ENCODE measurements at regions of chr6 and their contacts with region 1.

Region 1: DNA sequence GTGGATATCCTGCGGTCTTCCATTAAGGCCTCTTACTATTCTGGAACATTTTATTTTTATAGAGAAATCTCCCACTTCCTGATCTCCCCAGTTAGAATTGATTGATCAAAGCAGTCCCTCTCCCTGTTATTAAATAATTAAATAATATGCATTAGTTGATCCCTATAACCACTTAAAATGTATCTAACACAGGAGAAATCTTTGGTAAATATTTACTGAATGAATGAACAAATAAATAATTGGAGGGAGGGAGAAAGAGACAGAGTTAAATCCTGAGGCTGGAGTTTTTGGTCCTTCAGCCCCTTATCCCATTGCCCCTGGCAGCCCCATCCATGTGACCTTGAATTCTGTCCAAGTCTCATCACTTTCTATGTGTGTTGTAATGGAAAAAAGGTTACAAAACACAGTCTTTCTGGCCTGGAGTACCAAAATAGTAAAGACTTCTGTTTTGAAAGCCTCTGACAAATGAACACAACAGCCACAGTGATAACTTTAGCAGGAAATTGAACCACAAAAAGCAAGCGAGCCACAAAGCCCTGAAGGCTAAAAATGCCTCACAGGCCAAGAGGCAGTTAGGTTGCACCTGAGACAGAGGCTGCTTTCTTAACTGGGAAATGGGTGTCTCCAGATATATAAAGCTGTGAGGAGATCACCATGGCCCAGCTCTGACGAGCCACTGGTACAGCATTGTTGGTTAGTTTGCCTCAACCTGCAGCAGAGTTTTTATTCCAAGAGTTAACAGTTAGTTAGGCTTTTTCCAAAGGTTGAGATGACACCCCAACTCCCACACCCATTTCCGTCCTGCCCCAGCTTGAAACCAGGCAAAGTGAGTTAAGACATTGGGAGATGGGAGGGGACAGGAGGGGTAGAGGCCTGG is 11.3 kb downstream of the NT5E start:
- DNase-seq: no peak
- ATAC-seq: peak; percentile 56
- H3K4me3 ChIP-seq: no peak overlapping the region
- H3K27ac ChIP-seq: peak overlapping the region; percentile 52 to 57
- H3K4me1 ChIP-seq: peaks cover 2 to 16% of the 10 kb centered on the region in 2 donors
- H3K27me3 ChIP-seq: no peaks in the 10 kb centered on the region

Region 2: DNA sequence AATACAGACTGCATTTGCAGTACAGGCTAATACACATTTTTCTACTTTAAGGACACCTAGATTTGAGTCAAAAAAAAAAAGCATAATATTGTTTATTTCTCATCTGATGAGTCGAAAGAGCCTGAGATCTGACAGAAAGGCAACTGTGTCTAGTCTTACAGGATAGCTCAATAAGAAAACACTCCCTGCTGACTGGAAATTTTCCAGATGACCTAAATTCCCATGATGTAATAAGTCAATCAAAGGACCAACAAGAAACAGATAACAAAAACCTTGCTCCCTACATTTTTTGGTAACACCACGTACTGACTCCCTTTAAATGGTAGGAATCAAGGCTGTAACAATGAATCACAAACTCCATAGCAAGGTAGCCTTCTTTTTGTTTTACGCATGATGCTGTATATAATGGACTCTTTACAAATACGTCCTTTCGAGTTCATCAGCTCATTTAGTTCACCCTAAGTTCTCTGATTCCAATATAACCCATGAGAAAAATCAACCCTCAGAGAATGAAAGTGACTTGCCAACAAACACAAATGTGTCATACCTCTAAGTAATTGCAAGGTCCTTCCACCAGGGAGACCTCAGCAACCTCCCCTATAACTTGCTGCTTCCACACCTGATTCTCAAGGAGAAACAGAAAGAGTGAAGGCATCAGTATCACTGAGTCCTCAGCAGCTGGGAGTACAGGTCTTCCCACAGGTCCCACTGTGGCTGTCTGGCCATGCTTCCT is 708.9 kb before region 1 on chr6:
- intact Hi-C with region 1: loop called in 1 of 2 experiments (anchors 10 kb)
- DNase-seq: no peak
- ATAC-seq: no peak
- H3K4me3 ChIP-seq: no peak overlapping the region
- H3K27ac ChIP-seq: peak overlapping the region in 1 of 2 donors; percentile 39
- H3K4me1 ChIP-seq: peaks cover 7 to 11% of the 10 kb centered on the region in 2 donors
- H3K27me3 ChIP-seq: no peaks in the 10 kb centered on the region

Region 3: DNA sequence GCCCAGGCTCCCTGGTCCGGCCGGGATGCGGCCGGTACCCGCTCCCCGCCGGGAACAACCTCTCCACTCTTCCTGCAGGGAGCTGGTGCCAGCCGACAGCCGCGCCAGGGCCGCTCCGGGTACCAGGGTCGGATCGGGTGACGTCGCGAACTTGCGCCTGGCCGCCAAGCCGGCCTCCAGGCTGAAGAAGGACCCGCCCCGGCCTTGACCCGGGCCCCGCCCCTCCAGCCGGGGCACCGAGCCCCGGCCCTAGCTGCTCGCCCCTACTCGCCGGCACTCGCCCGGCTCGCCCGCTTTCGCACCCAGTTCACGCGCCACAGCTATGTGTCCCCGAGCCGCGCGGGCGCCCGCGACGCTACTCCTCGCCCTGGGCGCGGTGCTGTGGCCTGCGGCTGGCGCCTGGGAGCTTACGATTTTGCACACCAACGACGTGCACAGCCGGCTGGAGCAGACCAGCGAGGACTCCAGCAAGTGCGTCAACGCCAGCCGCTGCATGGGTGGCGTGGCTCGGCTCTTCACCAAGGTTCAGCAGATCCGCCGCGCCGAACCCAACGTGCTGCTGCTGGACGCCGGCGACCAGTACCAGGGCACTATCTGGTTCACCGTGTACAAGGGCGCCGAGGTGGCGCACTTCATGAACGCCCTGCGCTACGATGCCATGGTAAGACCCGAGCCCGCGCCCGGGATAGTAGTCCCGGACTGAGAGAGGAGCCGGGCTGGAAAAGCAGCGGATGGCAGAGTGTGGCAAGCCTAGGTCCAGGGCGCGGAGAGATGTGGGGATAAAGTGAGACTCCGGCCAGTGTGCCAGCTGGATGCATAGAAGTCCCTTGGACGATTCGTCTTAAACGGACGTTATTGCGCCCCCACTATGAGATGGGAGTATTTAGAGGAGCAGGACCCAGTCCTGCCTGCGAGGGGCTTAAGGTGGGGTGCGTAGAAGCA is 11.1 kb before region 1 on chr6 and contains the start of gene NT5E:
- intact Hi-C with region 1: loop called in 1 of 2 experiments (anchors 2 kb)
- DNase-seq: peak; percentile 92 to 97
- ATAC-seq: peak; percentile 97
- H3K4me3 ChIP-seq: peak within 1 kb of the TSS; percentile 65 to 75
- H3K27ac ChIP-seq: peak within 1 kb of the TSS; percentile 84 to 88
- H3K4me1 ChIP-seq: peaks cover 3 to 9% of the 10 kb centered on the region in 2 donors
- H3K27me3 ChIP-seq: no peaks in the 10 kb centered on the region
- total RNA-seq, gene NT5E: 63.2 to 68.9 TPM